Heart right ventricle (tissue), 16 donors: ENCODE measurements at regions of chr15 and their contacts with region 1.

Region 1: GRCh38 chr15:63544258-63545026 is 40.0 kb downstream of the USP3 start:
- DNase-seq: no peak
- ATAC-seq: no peak
- H3K4me3 ChIP-seq: peak overlapping the region in 3 of 10 donors; percentile 6
- H3K27ac ChIP-seq: peak overlapping the region in 3 of 10 donors; percentile 26 to 32 (median 26)
- H3K4me1 ChIP-seq: peaks cover 0 to 32% (median 8%) of the 10 kb centered on the region in 9 donors
- H3K27me3 ChIP-seq: no peaks in the 10 kb centered on the region
- CTCF ChIP-seq: no peak

Region 2: GRCh38 chr15:63514531-63514943 is 29.9 kb before region 1 on chr15:
- intact Hi-C with region 1: loop called in 2 of 10 experiments (anchors 5 kb)
- DNase-seq: no peak
- ATAC-seq: peak in 1 of 8 donors; percentile 41
- H3K4me3 ChIP-seq: no peak overlapping the region
- H3K27ac ChIP-seq: peak overlapping the region in 1 of 10 donors; percentile 7
- H3K4me1 ChIP-seq: peaks cover 3 to 97% (median 61%) of the 10 kb centered on the region in 9 donors
- H3K27me3 ChIP-seq: no peaks in the 10 kb centered on the region
- CTCF ChIP-seq: no peak

Region 3: DNA sequence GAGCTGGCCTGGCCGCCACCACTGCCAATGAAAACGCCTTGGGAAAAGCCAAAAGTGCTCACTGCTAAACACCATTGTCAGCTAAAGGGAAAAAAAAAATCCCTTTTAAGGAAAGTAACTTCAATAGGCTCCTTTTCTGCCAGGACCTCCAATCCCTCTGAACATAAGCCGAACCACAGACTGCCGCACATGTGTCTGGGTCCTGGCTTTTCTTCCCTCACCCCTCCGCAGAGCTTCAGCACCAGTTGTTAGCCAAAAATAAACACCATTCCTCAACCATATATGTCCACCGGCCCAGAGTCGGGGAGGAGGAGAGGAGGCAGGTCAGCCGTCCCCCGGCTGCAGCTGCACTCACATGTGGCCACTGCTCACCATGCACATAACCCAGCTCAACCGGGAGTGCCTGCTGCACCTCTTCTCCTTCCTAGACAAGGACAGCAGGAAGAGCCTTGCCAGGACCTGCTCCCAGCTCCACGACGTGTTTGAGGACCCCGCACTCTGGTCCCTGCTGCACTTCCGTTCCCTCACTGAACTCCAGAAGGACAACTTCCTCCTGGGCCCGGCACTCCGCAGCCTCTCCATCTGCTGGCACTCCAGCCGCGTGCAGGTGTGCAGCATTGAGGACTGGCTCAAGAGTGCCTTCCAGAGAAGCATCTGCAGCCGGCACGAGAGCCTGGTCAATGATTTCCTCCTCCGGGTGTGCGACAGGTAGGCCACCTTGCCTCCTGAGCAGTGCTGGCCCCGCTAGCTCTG is 52.8 kb after region 1 on chr15 and contains the start of gene FBXL22:
- intact Hi-C with region 1: no loop called
- DNase-seq: peak; percentile 35 to 60
- ATAC-seq: peak; percentile 12 to 72 (median 44)
- H3K4me3 ChIP-seq: peak within 1 kb of the TSS; percentile 27 to 74 (median 68)
- H3K27ac ChIP-seq: peak within 1 kb of the TSS; percentile 66 to 95 (median 89)
- H3K4me1 ChIP-seq: peaks cover 16 to 76% (median 63%) of the 10 kb centered on the region in 9 donors
- H3K27me3 ChIP-seq: no peaks in the 10 kb centered on the region
- CTCF ChIP-seq: no peak
- total RNA-seq, gene FBXL22: 10.9 to 37.7 (median 23.5) TPM